ENCODE measurements at regions of chr16 and their contacts with region 1.

Region 1: GRCh38 chr16:28181515-28181914 is 30.2 kb downstream of the XPO6 start:
- DNase-seq: peak; percentile 59 to 81
- H3K4me3 ChIP-seq: no peak overlapping the region
- H3K27ac ChIP-seq: peak overlapping the region; percentile 41
- H3K4me1 ChIP-seq: peaks cover 30% of the 10 kb centered on the region
- H3K27me3 ChIP-seq: no peaks in the 10 kb centered on the region
- CTCF ChIP-seq: no peak

Region 2: DNA sequence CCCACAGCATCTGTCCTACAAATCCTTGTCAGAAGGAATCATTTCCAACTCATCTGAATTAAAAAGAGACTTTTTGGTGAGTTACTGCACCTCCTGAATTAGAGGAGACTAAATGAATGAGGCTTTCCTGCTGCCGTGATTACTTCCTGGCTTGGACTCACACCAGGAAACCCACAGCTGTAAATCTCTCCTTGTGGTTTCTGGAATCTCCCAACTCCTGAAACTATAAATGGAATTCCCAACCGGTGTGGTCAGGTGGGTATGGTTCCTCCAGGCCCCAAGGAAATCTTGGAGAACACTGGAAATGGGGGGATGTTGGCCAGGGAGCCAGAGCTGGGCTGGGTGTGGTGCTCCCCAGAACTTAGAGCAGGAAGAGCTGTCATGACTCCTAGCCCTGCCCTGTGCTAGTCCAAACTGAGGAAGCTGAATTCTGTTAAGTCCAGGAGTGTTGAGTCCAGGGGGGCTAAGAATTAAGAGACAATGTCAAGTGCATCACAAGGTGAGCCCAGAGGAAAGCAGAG is 334.4 kb before region 1 on chr16:
- CTCF ChIA-PET with region 1: no interaction called
- POLR2A ChIA-PET with region 1: no interaction called
- intact Hi-C with region 1: no loop called
- DNase-seq: no peak
- H3K4me3 ChIP-seq: no peak overlapping the region
- H3K27ac ChIP-seq: no peak overlapping the region
- H3K4me1 ChIP-seq: no peaks in the 10 kb centered on the region
- H3K27me3 ChIP-seq: peaks cover 38% of the 10 kb centered on the region
- CTCF ChIP-seq: no peak

Region 3: GRCh38 chr16:28193530-28194423 is 12.3 kb after region 1 on chr16:
- CTCF ChIA-PET with region 1: no interaction called
- POLR2A ChIA-PET with region 1: interaction called, 30 read pairs
- intact Hi-C with region 1: loop called (anchors 1 kb)
- DNase-seq: peak; percentile 84 to 98
- H3K4me3 ChIP-seq: no peak overlapping the region
- H3K27ac ChIP-seq: peak overlapping the region; percentile 75
- H3K4me1 ChIP-seq: peaks cover 73% of the 10 kb centered on the region
- H3K27me3 ChIP-seq: no peaks in the 10 kb centered on the region
- CTCF ChIP-seq: no peak

Region 4: GRCh38 chr16:28202147-28202746 is 20.7 kb after region 1 on chr16:
- CTCF ChIA-PET with region 1: no interaction called
- POLR2A ChIA-PET with region 1: interaction called, 16 read pairs
- intact Hi-C with region 1: no loop called
- DNase-seq: no peak
- H3K4me3 ChIP-seq: no peak overlapping the region
- H3K27ac ChIP-seq: no peak overlapping the region
- H3K4me1 ChIP-seq: peaks cover 2% of the 10 kb centered on the region; the same call in 1 of the 2 replicates
- H3K27me3 ChIP-seq: no peaks in the 10 kb centered on the region
- CTCF ChIP-seq: no peak